CD4-positive, alpha-beta memory T cell (primary cell): ENCODE measurements at regions of chr1 and their contacts with region 1.

Region 1: DNA sequence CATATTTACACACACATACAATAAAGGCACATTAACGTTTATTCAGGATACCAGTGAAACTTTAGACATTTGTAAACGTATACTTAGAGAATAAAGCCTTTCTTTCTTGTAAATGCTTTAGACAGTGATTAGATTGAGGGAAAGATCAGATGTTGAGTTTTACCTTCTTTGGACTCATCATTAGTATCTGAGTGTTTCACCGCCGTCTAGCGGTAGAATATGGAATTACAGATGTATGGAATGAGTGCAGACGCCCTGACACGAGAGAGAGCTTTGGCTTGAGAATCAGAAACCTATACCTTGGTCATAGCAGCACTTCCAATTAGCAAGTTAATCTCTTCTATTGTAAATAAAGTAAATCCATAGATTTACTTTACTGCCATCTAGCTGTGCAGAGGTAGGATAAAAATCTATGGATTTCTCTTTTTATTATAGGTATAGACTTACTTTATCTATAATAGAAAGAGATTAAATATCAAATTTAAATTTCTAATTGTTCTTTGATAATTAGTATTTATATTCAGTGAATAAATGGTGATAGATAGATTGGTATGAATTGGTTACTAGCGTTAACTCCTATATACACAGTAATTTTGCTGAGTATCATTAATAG is 12.6 kb downstream of the FLG2 start:
- DNase-seq: peak; percentile 55 to 67 (median 60)
- H3K4me3 ChIP-seq: no peak overlapping the region
- H3K4me3 Mint-ChIP-seq: no peak overlapping the region
- H3K27ac ChIP-seq: no peak overlapping the region
- H3K27ac Mint-ChIP-seq: no peak overlapping the region
- H3K4me1 ChIP-seq: no peaks in the 10 kb centered on the region
- H3K4me1 Mint-ChIP-seq: peaks cover 0 to 2% (median under 1%) of the 10 kb centered on the region in 4 donors
- H3K27me3 ChIP-seq: no peaks in the 10 kb centered on the region
- H3K27me3 Mint-ChIP-seq: peaks cover 7 to 9% of the 10 kb centered on the region in 2 donors

Region 2: DNA sequence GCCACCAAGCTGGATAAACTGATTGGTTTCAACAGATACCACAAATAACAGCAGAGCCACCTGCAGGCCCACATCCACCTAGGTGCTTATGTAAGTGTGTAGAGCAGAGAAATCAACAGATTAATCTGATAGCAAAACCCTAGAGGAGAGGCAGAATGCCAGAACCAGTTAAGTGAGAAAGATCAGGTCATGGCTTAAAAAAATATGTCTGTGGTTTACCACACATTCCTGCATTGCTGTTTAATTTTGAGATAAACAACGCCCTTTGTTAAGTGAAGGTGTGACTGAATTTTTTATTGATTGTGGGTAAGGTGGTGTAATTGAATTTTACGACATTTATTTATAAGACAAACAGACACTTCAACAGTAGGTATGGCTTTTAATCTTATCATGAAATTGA is 45.7 kb after region 1 on chr1:
- CTCF ChIA-PET with region 1: interaction called, 21 read pairs
- POLR2A ChIA-PET with region 1: interaction called, 8 read pairs
- intact Hi-C with region 1: loop called (anchors 1 kb)
- DNase-seq: peak; percentile 74 to 85 (median 82)
- H3K4me3 ChIP-seq: no peak overlapping the region
- H3K4me3 Mint-ChIP-seq: peak overlapping the region; percentile 2 to 93 (median 70)
- H3K27ac ChIP-seq: no peak overlapping the region
- H3K27ac Mint-ChIP-seq: peak overlapping the region; percentile 43 to 94 (median 79)
- H3K4me1 ChIP-seq: peaks cover 44% of the 10 kb centered on the region
- H3K4me1 Mint-ChIP-seq: peaks cover 35 to 47% (median 39%) of the 10 kb centered on the region in 4 donors
- H3K27me3 ChIP-seq: peaks cover 7% of the 10 kb centered on the region
- H3K27me3 Mint-ChIP-seq: peaks cover 12 to 17% of the 10 kb centered on the region in 2 donors

Region 3: DNA sequence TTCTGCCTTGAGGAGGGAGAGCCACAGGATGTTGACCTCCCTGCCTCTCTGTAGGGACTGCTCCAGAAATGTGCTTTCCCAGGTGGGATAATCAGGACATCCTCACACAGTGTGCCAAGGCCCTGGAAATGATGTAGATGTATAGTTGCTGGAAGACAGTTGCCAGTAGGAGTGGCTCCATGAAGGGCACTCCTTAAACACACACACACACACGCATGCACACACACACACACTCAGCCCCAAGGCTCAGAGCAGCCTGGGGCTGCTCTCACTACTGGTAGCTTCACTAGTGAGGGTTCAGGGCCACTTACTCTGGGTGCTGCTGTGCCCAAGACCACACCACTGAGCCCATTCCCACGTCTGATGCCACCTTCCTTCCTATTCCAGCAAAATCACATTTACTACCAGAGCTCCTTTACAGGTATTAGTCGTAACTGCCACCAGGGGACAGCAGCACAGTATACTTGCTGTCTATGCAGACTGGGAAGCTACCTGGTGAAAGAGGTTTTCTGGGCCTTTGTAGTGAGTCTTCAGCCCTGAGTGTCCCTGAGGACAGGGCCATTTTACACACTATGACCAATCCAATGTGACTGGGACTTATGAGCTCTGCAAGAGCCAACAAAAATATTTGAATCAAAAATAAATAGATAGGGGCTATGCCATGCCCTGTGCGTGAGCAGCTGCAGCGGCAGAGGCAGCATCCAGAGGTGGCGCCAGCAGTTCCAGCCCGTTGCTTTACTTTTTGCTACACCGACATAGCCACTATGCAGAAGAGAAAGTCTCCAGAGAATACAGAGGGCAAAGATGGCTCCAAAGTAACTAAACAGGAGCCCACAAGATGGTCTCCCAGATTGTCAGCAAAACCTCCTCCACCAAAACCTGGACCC is 51.8 kb after region 1 on chr1:
- CTCF ChIA-PET with region 1: interaction called, 21 read pairs
- POLR2A ChIA-PET with region 1: interaction called, 7 read pairs
- intact Hi-C with region 1: no loop called
- DNase-seq: peak in 4 of 5 donors; percentile 13 to 30 (median 16)
- H3K4me3 ChIP-seq: no peak overlapping the region
- H3K4me3 Mint-ChIP-seq: peak overlapping the region in 1 of 8 donors; percentile 43
- H3K27ac ChIP-seq: no peak overlapping the region
- H3K27ac Mint-ChIP-seq: peak overlapping the region in 3 of 7 donors; percentile 1 to 69 (median 5)
- H3K4me1 ChIP-seq: peaks cover 16% of the 10 kb centered on the region
- H3K4me1 Mint-ChIP-seq: peaks cover 14 to 24% (median 22%) of the 10 kb centered on the region in 4 donors
- H3K27me3 ChIP-seq: no peaks in the 10 kb centered on the region
- H3K27me3 Mint-ChIP-seq: peaks cover 3 to 6% of the 10 kb centered on the region in 2 donors

Region 4: GRCh38 chr1:152410599-152410998 is 63.4 kb after region 1 on chr1:
- CTCF ChIA-PET with region 1: no interaction called
- POLR2A ChIA-PET with region 1: no interaction called
- intact Hi-C with region 1: no loop called
- DNase-seq: no peak
- H3K4me3 ChIP-seq: no peak overlapping the region
- H3K4me3 Mint-ChIP-seq: no peak overlapping the region
- H3K27ac ChIP-seq: no peak overlapping the region
- H3K27ac Mint-ChIP-seq: no peak overlapping the region
- H3K4me1 ChIP-seq: no peaks in the 10 kb centered on the region
- H3K4me1 Mint-ChIP-seq: no peaks in the 10 kb centered on the region
- H3K27me3 ChIP-seq: no peaks in the 10 kb centered on the region
- H3K27me3 Mint-ChIP-seq: peaks cover 14 to 16% of the 10 kb centered on the region in 2 donors

Region 5: DNA sequence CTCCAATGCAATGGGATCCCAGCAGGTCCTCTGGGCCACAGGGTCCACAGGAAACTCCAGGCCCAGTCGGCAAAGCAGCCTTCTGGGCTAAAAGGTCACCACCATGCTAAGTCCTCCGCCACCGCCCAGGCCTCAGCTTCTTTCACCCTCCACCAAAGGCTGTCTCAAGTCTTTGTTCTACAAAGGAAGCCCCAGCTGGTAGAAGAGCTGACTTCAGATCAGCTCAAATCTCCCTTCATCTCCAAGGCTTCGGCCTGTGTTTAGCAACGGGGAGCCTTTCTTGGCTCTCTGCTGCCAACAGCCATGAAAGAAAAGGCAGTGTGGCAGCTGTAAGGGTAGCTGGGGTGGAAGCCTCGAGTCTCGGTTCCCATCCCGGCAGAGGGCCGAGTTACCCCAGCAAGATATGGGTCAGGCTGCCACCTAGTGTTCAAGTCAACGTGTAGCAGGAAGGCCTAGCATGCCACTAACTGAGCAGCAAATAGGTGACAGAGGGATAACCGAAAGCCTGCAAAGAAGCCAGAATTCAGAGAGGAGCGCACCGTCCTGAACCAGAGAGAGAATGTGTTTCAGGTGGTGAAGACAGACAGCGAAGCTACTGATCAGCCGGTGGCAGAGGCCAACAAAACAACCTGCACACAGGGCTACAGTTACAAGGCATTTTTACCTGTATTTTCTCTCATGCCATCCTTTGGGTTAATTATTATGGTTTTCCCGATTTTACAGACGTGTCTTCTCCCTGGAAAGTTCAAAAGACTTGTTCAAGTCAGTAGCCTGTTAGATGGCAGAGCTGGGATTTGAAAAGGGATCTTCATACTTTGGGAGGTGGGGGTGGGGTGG is 93.6 kb after region 1 on chr1:
- CTCF ChIA-PET with region 1: interaction called, 23 read pairs
- POLR2A ChIA-PET with region 1: no interaction called
- intact Hi-C with region 1: loop called (anchors 1 kb)
- DNase-seq: peak; percentile 74 to 77 (median 75)
- H3K4me3 ChIP-seq: no peak overlapping the region
- H3K4me3 Mint-ChIP-seq: peak overlapping the region in 1 of 8 donors; percentile 56
- H3K27ac ChIP-seq: no peak overlapping the region
- H3K27ac Mint-ChIP-seq: peak overlapping the region in 2 of 7 donors; percentile 44 to 68
- H3K4me1 ChIP-seq: no peaks in the 10 kb centered on the region
- H3K4me1 Mint-ChIP-seq: peaks cover 4 to 14% (median 8%) of the 10 kb centered on the region in 4 donors
- H3K27me3 ChIP-seq: no peaks in the 10 kb centered on the region
- H3K27me3 Mint-ChIP-seq: peaks cover 19 to 22% of the 10 kb centered on the region in 2 donors